BJ (cell line): ENCODE measurements at regions of chr19 and their contacts with region 1.

Region 1: DNA sequence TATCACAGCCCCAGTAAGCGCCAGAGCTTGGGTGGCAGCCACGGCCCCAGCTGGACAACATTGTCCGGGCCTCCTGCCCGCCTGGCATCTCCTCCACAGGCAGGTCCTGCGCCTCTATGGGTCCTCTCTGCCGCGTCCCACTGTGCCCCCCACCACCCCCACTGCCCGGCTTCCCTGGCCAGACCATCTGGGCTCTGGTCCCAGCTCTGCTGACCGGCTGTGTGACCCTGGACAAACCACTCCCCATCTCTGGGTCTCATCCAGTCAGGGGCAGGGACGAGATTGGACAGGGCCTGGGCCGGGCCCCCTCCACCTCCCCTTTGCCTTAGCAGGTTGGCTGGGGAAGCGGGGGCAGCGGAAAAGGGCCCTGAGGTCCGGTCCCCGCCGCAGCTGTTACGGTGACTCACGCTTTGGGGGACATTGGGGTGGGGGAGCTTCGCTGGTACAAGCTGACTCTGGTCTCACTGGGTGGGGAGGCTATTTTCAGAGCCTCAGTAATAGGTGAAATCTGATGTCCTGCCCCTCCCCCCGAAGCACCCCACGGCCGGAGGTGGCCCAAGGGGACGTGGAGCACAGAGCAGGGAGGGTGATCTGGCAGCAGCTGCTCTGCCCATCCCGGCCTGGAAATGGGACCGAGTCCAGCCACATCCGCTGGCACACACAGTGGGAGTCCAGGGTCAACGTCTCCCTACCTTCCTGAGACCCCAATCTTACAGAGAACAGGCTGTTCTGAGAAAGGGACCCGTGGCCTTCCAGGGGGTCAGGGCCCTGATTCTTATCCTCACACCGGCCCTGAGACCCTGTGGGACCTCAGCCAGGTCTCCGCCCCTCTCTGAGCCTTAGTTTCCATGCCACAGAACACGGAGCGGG is 9.1 kb downstream of the NFIC start:
- DNase-seq: no peak
- H3K4me3 ChIP-seq: no peak overlapping the region
- H3K27me3 ChIP-seq: no peaks in the 10 kb centered on the region
- CTCF ChIP-seq: no peak

Region 2: DNA sequence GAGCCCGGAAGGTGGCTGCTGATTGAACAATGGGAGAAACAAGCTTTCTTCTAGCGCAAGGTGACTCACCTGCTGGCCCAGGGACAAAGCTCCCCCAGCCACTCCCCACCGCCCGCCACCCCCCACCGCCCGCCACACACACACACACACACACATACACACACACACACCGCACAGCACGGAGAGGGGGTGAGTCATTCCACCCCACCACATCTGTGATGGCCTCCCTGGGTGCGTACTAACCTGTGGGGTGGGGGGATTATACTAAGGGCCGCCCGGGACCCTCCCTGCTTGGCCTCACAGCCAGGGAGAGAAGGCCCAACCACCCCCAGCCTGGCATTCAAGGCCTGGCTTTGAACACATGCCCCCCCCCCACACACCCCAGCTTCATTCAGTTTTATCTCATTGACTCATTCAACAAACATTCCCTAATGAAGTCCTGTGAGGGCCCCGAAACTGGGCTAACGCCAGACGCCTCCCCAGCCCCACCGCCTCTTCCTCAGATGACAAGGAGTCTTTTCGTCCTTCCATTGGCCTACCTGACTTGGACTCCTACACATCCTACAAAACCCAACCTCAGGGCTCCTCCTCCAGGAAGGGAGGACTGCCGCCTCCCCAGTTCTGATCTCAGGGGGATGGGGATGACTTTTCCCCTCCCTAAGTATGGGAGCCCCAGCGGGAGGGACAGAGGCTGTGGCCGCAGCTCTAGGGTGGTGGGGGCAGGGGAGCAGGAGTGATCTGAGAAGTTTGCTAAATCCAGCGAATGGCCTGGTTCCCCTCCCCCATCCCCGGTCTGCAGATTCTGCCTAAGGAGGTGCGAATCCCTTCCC is 1628.0 kb before region 1 on chr19:
- CTCF ChIA-PET with region 1: no interaction called
- POLR2A ChIA-PET with region 1: interaction called, 15 read pairs
- DNase-seq: peak; percentile 19
- H3K4me3 ChIP-seq: no peak overlapping the region
- H3K27me3 ChIP-seq: peaks cover 43% of the 10 kb centered on the region
- CTCF ChIP-seq: no peak

Region 3: GRCh38 chr19:3359015-3359918 is 16.2 kb before region 1 on chr19:
- CTCF ChIA-PET with region 1: no interaction called
- POLR2A ChIA-PET with region 1: interaction called, 15 read pairs
- DNase-seq: no peak
- H3K4me3 ChIP-seq: peak overlapping the region; percentile 81
- H3K27me3 ChIP-seq: no peaks in the 10 kb centered on the region
- CTCF ChIP-seq: no peak

Region 4: GRCh38 chr19:3479177-3479833 is 103.8 kb after region 1 on chr19:
- CTCF ChIA-PET with region 1: no interaction called
- POLR2A ChIA-PET with region 1: no interaction called
- DNase-seq: no peak
- H3K4me3 ChIP-seq: no peak overlapping the region
- H3K27me3 ChIP-seq: peaks cover 14% of the 10 kb centered on the region
- CTCF ChIP-seq: no peak

Region 5: GRCh38 chr19:5360414-5360813 is 1985.0 kb after region 1 on chr19:
- CTCF ChIA-PET with region 1: no interaction called
- POLR2A ChIA-PET with region 1: no interaction called
- DNase-seq: no peak
- H3K4me3 ChIP-seq: no peak overlapping the region
- H3K27me3 ChIP-seq: no peaks in the 10 kb centered on the region; the same call in none of the 2 replicates
- CTCF ChIP-seq: no peak